Spleen (tissue), 13 donors: ENCODE measurements at regions of chr9 and their contacts with region 1.

Region 1: DNA sequence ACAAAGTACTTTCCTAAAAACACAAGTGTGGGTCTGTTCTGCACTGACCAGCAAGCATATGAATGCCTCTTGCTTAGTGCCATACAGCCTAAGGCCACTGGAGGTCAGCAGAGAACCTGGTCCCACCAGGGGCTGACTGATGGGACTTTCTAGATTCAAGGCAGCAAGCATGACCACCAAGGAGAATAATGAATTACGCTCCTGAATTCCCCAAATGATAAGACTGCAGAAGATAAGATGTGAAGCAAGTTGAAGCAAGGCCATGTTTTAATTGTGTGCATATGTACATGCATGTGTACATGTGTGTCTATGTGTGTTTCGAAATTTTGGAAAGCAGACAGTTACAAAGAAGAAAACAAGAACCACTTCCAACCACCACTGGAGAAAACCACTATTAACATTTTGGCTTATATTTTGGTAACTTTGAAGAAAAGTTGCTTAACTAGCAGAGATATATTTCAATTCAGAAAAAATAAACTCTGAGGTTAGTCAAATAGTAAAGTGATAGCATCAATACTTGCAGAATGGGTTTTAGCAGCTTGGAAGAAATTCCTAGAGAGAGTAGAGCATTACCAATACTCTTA is 70.5 kb downstream of the ERP44 start:
- DNase-seq: peak; percentile 80
- H3K4me3 ChIP-seq: no peak overlapping the region
- H3K27ac ChIP-seq: no peak overlapping the region
- H3K4me1 ChIP-seq: peaks cover 0 to 41% (median 16%) of the 10 kb centered on the region in 6 donors
- H3K27me3 ChIP-seq: no peaks in the 10 kb centered on the region
- CTCF ChIP-seq: peak; percentile 82 to 92 (median 88)
- POLR2A ChIP-seq: no peak

Region 2: GRCh38 chr9:100084734-100085133 is 56.4 kb after region 1 on chr9:
- intact Hi-C with region 1: loop called (anchors 10 kb)
- DNase-seq: no peak
- H3K4me3 ChIP-seq: peak overlapping the region in 2 of 8 donors; percentile 4 to 45
- H3K27ac ChIP-seq: peak overlapping the region in 4 of 8 donors; percentile 3 to 69 (median 62)
- H3K4me1 ChIP-seq: peaks cover 37 to 100% (median 95%) of the 10 kb centered on the region in 6 donors
- H3K27me3 ChIP-seq: no peaks in the 10 kb centered on the region
- CTCF ChIP-seq: no peak
- POLR2A ChIP-seq: no peak

Region 3: DNA sequence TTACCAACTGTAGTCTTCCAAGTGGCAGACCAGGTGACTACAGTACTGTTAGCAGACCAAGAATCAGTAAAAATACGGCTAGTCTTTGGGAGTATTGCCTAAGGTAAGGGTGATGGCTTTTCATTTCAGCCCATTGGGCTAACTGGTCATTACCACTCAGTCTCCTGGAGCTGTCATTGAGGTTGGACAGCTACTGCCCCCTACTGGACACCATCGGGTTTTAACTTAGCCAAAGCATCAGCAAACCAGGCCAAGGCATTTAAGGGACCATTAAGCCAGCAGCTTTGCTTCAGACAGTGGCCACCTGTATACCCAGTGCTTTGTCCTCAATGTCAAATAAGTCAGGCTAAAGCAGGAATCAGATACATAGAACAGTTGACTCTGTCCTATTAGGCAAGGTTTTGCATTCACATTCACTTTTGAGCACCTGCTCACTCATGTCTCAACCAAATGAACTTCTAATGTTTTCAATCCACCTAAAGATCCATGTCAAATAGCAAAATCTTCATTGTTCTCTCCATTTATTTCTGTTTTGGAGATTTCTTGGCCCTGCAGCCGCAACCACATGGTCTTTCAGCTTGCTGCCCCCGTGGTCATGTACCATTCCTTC is 188.0 kb after region 1 on chr9:
- intact Hi-C with region 1: loop called (anchors 5 kb)
- DNase-seq: no peak
- H3K4me3 ChIP-seq: no peak overlapping the region
- H3K27ac ChIP-seq: no peak overlapping the region
- H3K4me1 ChIP-seq: no peaks in the 10 kb centered on the region
- H3K27me3 ChIP-seq: no peaks in the 10 kb centered on the region
- CTCF ChIP-seq: peak; percentile 34 to 79 (median 69)
- POLR2A ChIP-seq: no peak

Region 4: DNA sequence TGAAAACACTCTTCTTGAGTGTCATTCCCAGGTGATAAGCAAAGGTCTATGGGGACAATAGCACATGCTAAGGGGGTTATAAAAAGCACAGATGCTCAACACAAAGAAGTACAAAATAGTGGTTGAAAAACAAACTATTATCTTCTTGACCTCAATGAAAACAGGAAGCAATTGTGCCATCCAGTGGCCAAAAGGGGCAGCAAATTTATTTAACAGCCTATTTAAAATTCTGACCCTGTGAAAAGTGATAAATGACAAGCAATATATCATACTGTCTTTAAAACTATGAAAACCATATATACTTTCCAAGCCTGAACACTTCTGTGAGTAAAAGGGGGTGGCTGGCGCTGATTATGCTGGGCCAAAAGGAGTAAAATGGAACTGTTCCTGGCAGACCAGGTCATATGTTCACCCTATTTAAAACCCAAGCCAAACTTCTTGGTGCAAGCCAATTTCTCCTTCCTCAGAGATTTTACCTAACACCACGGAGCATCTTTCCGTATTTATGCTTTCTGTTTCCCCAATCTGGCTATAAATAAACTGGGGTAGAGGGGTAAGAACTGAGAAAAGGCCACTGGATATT is 294.8 kb after region 1 on chr9:
- intact Hi-C with region 1: loop called (anchors 10 kb)
- DNase-seq: no peak
- H3K4me3 ChIP-seq: no peak overlapping the region
- H3K27ac ChIP-seq: no peak overlapping the region
- H3K4me1 ChIP-seq: peaks cover 0 to 20% (median 0%) of the 10 kb centered on the region in 6 donors
- H3K27me3 ChIP-seq: no peaks in the 10 kb centered on the region
- CTCF ChIP-seq: peak in 8 of 11 experiments; percentile 31 to 62 (median 55)
- POLR2A ChIP-seq: no peak